PC-9 (cell line): ENCODE measurements at regions of chr10 and their contacts with region 1.

Region 1: DNA sequence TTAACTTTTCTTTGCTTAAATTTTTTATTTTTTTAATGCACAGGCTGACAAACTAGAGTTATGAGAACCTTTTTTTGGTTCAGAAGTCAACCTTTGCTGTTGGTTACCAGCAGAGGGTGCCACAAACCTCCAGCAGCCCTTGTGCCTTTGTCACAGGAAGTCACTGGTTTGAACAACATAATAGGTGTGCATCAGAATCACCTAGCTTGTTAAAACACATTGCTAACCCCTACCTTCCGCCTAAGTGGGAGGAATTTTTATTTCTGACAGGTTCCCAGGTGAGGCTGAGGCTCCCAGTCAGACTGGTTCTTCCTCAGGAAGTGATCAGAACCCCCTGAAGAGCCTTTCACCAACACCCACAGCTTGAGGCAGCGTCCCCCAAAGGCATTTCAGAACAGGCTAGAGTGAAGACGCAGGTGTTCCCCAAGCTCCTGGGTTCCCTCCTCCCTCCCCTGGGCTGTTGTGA is 22.6 kb upstream of the VDAC2 start:
- DNase-seq: peak; percentile 73 to 96
- H3K4me3 ChIP-seq: no peak overlapping the region; the same call in 1 of the 2 replicates
- H3K27ac ChIP-seq: peak overlapping the region; percentile 49
- H3K4me1 ChIP-seq: peaks cover 57% of the 10 kb centered on the region
- H3K27me3 ChIP-seq: no peaks in the 10 kb centered on the region
- CTCF ChIP-seq: peak; percentile 84

Region 2: GRCh38 chr10:74189999-74190421 is 998.0 kb before region 1 on chr10:
- CTCF ChIA-PET with region 1: no interaction called
- POLR2A ChIA-PET with region 1: no interaction called
- intact Hi-C with region 1: no loop called
- DNase-seq: peak; percentile 70 to 98
- H3K4me3 ChIP-seq: peak overlapping the region; percentile 50; the same call in 1 of the 2 replicates
- H3K27ac ChIP-seq: peak overlapping the region; percentile 96
- H3K4me1 ChIP-seq: peaks cover 74% of the 10 kb centered on the region
- H3K27me3 ChIP-seq: no peaks in the 10 kb centered on the region
- CTCF ChIP-seq: no peak

Region 3: GRCh38 chr10:75146780-75147179 is 41.2 kb before region 1 on chr10:
- CTCF ChIA-PET with region 1: no interaction called
- POLR2A ChIA-PET with region 1: no interaction called
- intact Hi-C with region 1: no loop called
- DNase-seq: no peak
- H3K4me3 ChIP-seq: no peak overlapping the region
- H3K27ac ChIP-seq: no peak overlapping the region
- H3K4me1 ChIP-seq: peaks cover 24% of the 10 kb centered on the region
- H3K27me3 ChIP-seq: no peaks in the 10 kb centered on the region
- CTCF ChIP-seq: no peak

Region 4: DNA sequence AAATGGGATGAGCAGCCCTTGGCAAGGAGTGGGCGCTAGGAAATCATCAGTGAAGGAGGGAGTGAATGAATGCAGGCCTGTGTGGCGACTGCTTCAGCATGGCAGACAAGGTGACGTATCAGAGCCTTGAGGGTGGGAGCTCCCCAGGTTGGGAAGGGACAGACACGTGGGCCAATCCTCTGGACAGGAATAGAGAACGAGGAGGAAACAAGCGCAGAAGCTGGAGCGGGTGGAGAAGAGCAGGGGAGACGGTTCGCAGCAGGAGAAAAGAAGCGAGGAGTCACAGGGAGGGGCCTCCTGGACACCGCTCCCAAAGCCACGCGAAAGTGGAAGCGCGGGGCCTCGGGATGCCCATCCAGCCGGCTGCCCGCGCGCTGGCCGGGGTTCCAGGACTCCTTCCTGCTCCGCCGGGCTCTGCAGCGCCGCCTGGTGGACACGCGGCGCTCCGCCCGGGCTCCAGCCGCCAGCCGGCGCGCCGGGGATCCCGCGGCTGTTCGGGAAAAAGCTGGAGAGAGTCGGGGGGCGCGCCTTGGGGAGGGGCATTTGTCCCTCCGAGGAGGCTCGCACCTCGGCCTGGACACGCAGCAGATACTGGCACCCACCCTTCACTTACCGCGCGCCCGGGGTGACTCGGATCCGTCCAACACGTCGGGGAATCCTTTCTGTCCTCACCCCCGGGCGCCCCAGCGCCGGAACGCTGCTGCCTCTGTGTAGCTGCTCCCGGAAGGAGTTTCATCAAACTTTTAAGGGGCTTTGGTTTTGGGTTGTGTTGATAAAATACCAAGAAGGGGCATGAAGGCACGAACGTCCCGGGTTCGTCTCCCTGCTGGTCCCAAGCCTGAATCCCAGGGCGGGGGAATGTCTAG is 207.3 kb after region 1 on chr10:
- CTCF ChIA-PET with region 1: no interaction called
- POLR2A ChIA-PET with region 1: no interaction called
- intact Hi-C with region 1: loop called (anchors 2 kb)
- DNase-seq: peak; percentile 58 to 60
- H3K4me3 ChIP-seq: peak overlapping the region; percentile 84
- H3K27ac ChIP-seq: peak overlapping the region; percentile 90
- H3K4me1 ChIP-seq: peaks cover 14% of the 10 kb centered on the region
- H3K27me3 ChIP-seq: no peaks in the 10 kb centered on the region
- CTCF ChIP-seq: peak; percentile 90